CD4-positive, alpha-beta memory T cell (primary cell): ENCODE measurements at regions of chr4 and their contacts with region 1.

Region 1: GRCh38 chr4:38179690-38180377 is 219.6 kb downstream of the PTTG2 start:
- DNase-seq: peak; percentile 69 to 77 (median 70)
- H3K4me3 ChIP-seq: no peak overlapping the region
- H3K4me3 Mint-ChIP-seq: peak overlapping the region in 1 of 8 donors; percentile 8
- H3K27ac ChIP-seq: no peak overlapping the region
- H3K27ac Mint-ChIP-seq: peak overlapping the region in 5 of 7 donors; percentile 0 to 48 (median 35)
- H3K4me1 ChIP-seq: peaks cover 39% of the 10 kb centered on the region
- H3K4me1 Mint-ChIP-seq: peaks cover 29 to 58% (median 42%) of the 10 kb centered on the region in 4 donors
- H3K27me3 ChIP-seq: no peaks in the 10 kb centered on the region
- H3K27me3 Mint-ChIP-seq: no peaks in the 10 kb centered on the region

Region 2: DNA sequence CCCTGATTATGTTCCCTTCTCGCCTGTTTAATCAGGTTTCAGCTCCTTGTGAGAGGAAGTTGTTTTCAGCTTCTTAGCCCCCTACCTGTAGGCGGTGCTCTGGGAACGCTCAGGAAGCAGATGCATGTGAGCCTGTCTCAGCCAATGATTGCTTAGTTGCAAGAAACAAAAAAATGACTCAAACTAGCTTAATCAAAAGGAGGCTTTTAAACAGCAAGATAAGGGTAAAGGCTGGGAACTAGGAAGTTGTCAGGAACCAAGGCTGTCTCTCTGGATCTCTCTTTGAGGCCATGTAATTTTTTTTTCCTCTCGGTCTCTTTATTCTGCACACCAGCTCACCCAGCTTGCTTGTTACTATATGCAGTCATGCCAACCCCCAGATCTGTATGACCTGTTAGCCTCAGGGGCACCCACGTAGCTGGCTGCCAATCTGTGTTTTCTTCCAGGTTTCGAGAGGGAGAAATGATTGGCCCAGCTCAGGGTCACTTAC is 110.5 kb before region 1 on chr4:
- CTCF ChIA-PET with region 1: interaction called, 114 read pairs
- POLR2A ChIA-PET with region 1: no interaction called
- intact Hi-C with region 1: no loop called
- DNase-seq: peak in 4 of 5 donors; percentile 4 to 52 (median 19)
- H3K4me3 ChIP-seq: no peak overlapping the region
- H3K4me3 Mint-ChIP-seq: no peak overlapping the region
- H3K27ac ChIP-seq: no peak overlapping the region
- H3K27ac Mint-ChIP-seq: peak overlapping the region in 1 of 7 donors; percentile 14
- H3K4me1 ChIP-seq: no peaks in the 10 kb centered on the region
- H3K4me1 Mint-ChIP-seq: peaks cover 2 to 9% (median 4%) of the 10 kb centered on the region in 4 donors
- H3K27me3 ChIP-seq: no peaks in the 10 kb centered on the region
- H3K27me3 Mint-ChIP-seq: no peaks in the 10 kb centered on the region

Region 3: DNA sequence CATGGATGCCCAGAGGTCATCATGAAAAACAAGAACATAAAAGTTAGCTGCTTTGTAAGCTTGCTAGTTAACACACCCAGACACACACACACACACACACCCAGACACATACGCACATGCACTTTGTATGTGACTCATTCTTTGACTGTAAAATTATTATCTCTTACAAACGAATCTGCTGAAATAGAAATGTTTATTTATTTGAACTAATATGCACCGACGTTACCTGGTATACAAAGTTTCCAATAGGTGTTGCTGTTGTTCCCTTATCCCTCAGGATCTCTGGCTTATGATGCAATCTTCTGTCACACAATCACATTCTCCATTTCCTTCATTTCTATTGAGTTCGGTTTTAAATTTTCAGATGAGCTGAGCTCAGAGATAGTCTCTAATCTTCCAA is 10.3 kb before region 1 on chr4:
- CTCF ChIA-PET with region 1: interaction called, 10 read pairs
- POLR2A ChIA-PET with region 1: no interaction called
- intact Hi-C with region 1: no loop called
- DNase-seq: no peak
- H3K4me3 ChIP-seq: no peak overlapping the region
- H3K4me3 Mint-ChIP-seq: no peak overlapping the region
- H3K27ac ChIP-seq: no peak overlapping the region
- H3K27ac Mint-ChIP-seq: no peak overlapping the region
- H3K4me1 ChIP-seq: no peaks in the 10 kb centered on the region
- H3K4me1 Mint-ChIP-seq: peaks cover 1 to 15% (median 7%) of the 10 kb centered on the region in 4 donors
- H3K27me3 ChIP-seq: no peaks in the 10 kb centered on the region
- H3K27me3 Mint-ChIP-seq: no peaks in the 10 kb centered on the region

Region 4: DNA sequence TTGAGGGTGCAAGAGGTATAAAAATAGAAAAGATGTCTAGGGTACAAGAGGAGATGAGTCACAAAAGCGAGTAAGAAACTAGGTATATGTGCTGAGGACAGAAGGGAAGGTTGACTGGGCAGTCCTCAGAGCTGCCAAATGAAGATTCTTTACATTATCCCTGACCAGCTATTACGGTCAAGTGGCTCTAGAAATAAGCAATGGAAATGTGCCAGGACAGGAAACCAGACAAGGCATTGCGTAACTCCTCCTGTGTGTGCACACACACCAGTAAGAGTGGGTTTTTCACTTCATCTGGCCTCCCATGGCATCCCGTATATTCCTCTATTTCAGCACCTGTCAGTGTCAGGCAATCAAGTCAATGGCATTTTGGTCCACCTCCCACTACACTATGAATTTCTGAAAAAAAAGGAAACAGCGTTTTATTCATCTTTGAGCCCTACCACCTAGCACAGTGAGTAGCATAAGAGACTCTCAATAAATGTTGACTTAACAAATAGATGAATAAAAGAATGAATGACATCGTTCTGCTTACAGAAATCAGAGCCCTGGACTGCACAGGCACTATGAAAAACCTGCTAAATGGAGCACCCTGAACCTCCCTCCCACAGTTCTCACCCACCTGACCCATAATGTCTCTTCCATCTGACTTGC is 421.5 kb after region 1 on chr4:
- CTCF ChIA-PET with region 1: interaction called, 7 read pairs
- POLR2A ChIA-PET with region 1: no interaction called
- intact Hi-C with region 1: loop called (anchors 1 kb)
- DNase-seq: no peak
- H3K4me3 ChIP-seq: no peak overlapping the region
- H3K4me3 Mint-ChIP-seq: no peak overlapping the region
- H3K27ac ChIP-seq: no peak overlapping the region
- H3K27ac Mint-ChIP-seq: peak overlapping the region in 2 of 7 donors; percentile 42 to 43
- H3K4me1 ChIP-seq: peaks cover 15% of the 10 kb centered on the region
- H3K4me1 Mint-ChIP-seq: peaks cover 20 to 26% (median 24%) of the 10 kb centered on the region in 4 donors
- H3K27me3 ChIP-seq: no peaks in the 10 kb centered on the region
- H3K27me3 Mint-ChIP-seq: no peaks in the 10 kb centered on the region

Region 5: GRCh38 chr4:38675146-38676121 is 495.6 kb after region 1 on chr4:
- CTCF ChIA-PET with region 1: interaction called, 152 read pairs
- POLR2A ChIA-PET with region 1: interaction called, 41 read pairs
- intact Hi-C with region 1: loop called (anchors 1 kb)
- DNase-seq: peak; percentile 78 to 81 (median 80)
- H3K4me3 ChIP-seq: no peak overlapping the region
- H3K4me3 Mint-ChIP-seq: peak overlapping the region; percentile 15 to 85 (median 82)
- H3K27ac ChIP-seq: peak overlapping the region; percentile 22
- H3K27ac Mint-ChIP-seq: peak overlapping the region; percentile 76 to 96 (median 88)
- H3K4me1 ChIP-seq: peaks cover 79% of the 10 kb centered on the region
- H3K4me1 Mint-ChIP-seq: peaks cover 72 to 94% (median 84%) of the 10 kb centered on the region in 4 donors
- H3K27me3 ChIP-seq: no peaks in the 10 kb centered on the region
- H3K27me3 Mint-ChIP-seq: no peaks in the 10 kb centered on the region

Region 6: DNA sequence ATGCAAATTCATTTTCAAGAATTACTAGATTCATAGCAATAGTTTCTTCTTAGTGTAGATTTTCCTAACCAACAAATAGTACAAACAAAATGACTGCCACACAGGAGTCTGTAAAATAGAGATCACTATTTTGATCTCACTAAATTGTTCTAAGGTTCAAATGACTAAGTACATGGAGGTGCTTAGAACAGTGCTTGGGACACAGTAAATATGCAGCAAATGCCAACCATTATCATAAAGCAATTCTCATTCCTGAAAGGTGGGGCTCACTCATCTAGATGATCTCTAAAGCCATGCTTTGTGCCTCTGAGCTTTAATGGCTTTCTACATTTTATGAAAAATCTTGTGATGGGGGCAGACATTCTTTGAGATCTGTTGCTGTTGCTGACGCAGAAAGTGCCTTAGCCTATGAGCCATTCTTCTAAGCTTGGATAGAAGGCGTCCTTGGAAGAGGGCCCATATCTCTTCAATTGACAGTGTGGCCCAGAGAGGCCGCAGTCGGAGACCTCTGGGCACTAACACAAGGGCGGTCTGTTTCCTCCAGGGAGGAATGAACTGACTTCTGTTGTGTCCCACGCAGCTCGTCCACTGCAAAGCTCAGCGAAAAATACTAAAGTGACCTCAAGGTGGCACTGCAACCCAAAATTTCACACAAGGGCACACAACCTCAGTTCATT is 579.4 kb after region 1 on chr4:
- CTCF ChIA-PET with region 1: interaction called, 23 read pairs
- POLR2A ChIA-PET with region 1: no interaction called
- intact Hi-C with region 1: no loop called
- DNase-seq: peak; percentile 44 to 63 (median 55)
- H3K4me3 ChIP-seq: no peak overlapping the region
- H3K4me3 Mint-ChIP-seq: peak overlapping the region in 1 of 8 donors; percentile 39
- H3K27ac ChIP-seq: no peak overlapping the region
- H3K27ac Mint-ChIP-seq: peak overlapping the region in 1 of 7 donors; percentile 56
- H3K4me1 ChIP-seq: peaks cover 5% of the 10 kb centered on the region
- H3K4me1 Mint-ChIP-seq: peaks cover 5 to 10% (median 6%) of the 10 kb centered on the region in 4 donors
- H3K27me3 ChIP-seq: no peaks in the 10 kb centered on the region
- H3K27me3 Mint-ChIP-seq: no peaks in the 10 kb centered on the region